Endothelial cell of umbilical vein (primary cell): ENCODE measurements at regions of chr16 and their contacts with region 1.

Region 1: GRCh38 chr16:29815793-29816693 is at the start of gene PAGR1:
- DNase-seq: peak; percentile 100
- H3K4me3 ChIP-seq: peak within 1 kb of the TSS; percentile 65 to 85 (median 81)
- H3K27ac ChIP-seq: peak within 1 kb of the TSS; percentile 47
- H3K4me1 ChIP-seq: peaks cover 35% of the 10 kb centered on the region
- H3K27me3 ChIP-seq: no peaks in the 10 kb centered on the region
- CTCF ChIP-seq: peak; percentile 95 to 98
- POLR2A ChIP-seq: peak; percentile 80
- total RNA-seq, gene PAGR1: 24.2 and 26.3 TPM in 2 replicates

Region 2: GRCh38 chr16:29664091-29664921 is 151.7 kb before region 1 on chr16:
- CTCF ChIA-PET with region 1: no interaction called
- POLR2A ChIA-PET with region 1: no interaction called
- dilution Hi-C with region 1: no loop called
- intact Hi-C with region 1: no loop called
- DNase-seq: no peak
- H3K4me3 ChIP-seq: no peak overlapping the region
- H3K27ac ChIP-seq: no peak overlapping the region
- H3K4me1 ChIP-seq: no peaks in the 10 kb centered on the region
- H3K27me3 ChIP-seq: no peaks in the 10 kb centered on the region
- CTCF ChIP-seq: no peak
- POLR2A ChIP-seq: no peak

Region 3: DNA sequence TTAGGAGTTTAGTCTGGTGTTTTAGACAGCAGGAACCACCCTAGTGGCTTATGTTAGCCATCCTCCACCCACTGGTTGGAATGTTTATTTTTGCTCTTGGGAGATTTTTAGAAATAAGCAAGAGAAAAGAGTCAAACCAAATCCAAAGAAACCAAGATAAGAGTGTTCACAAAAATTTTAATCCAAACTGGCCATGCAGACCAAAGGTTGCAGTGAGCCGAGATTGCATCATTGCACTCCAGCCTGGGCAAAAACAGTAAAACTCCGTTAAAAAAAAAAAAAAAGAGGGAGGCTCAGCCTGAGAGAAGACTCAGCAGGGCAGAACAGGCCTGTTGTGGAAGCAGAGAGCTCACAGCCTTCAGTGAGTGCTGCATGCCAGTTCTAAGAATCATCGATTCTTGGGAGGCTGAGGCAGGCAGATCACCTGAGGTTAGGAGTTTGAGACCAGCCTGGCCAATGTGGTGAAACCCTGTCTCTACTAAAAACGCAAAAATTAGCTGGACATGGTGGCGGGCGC is 58.0 kb before region 1 on chr16:
- CTCF ChIA-PET with region 1: no interaction called
- POLR2A ChIA-PET with region 1: no interaction called
- dilution Hi-C with region 1: no loop called
- intact Hi-C with region 1: no loop called
- DNase-seq: no peak
- H3K4me3 ChIP-seq: no peak overlapping the region
- H3K27ac ChIP-seq: no peak overlapping the region
- H3K4me1 ChIP-seq: no peaks in the 10 kb centered on the region
- H3K27me3 ChIP-seq: no peaks in the 10 kb centered on the region
- CTCF ChIP-seq: no peak
- POLR2A ChIP-seq: no peak

Region 4: DNA sequence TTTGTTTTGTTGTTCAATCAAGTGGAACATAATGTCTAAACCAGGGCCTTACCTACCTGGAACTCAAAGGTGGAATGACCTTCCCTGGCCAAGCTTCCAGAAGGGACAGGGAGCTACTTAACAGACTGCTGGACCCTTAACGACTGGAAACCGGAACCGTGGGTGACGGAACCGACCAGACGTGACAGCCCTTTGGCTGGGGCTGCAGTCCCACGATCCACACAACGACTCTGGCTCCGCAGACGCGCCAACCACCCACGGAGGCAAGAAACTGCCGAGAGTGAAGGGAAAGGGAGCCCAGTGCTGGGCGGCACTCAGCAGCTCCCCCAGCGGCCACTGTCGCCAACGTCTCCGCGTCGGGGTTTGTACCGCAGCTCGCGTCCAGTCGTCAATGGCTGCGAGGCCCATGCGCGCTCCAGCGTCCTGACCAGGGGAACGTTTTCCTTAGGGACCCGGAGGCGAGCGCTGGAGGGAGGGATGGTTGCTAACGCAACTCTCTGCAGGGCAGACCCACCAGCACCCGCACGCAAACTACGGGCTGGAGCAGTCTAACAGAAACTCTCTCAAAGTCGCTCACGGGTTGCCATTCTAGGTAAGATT is 31.0 kb before region 1 on chr16:
- CTCF ChIA-PET with region 1: interaction called, 10 read pairs
- POLR2A ChIA-PET with region 1: no interaction called
- dilution Hi-C with region 1: no loop called
- intact Hi-C with region 1: loop called (anchors 1 kb)
- DNase-seq: peak; percentile 76
- H3K4me3 ChIP-seq: peak overlapping the region in 1 of 3 experiments; percentile 5
- H3K27ac ChIP-seq: no peak overlapping the region
- H3K4me1 ChIP-seq: peaks cover 10% of the 10 kb centered on the region
- H3K27me3 ChIP-seq: peaks cover 7 to 16% of the 10 kb centered on the region in 2 experiments
- CTCF ChIP-seq: peak; percentile 91 to 98
- POLR2A ChIP-seq: no peak

Region 5: GRCh38 chr16:29805378-29806098 is 10.5 kb before region 1 on chr16:
- CTCF ChIA-PET with region 1: interaction called, 50 read pairs
- POLR2A ChIA-PET with region 1: interaction called, 3 read pairs
- dilution Hi-C with region 1: no loop called
- intact Hi-C with region 1: no loop called
- DNase-seq: peak; percentile 97
- H3K4me3 ChIP-seq: peak overlapping the region; percentile 52 to 61 (median 58)
- H3K27ac ChIP-seq: peak overlapping the region; percentile 68
- H3K4me1 ChIP-seq: peaks cover 30% of the 10 kb centered on the region
- H3K27me3 ChIP-seq: no peaks in the 10 kb centered on the region
- CTCF ChIP-seq: no peak
- POLR2A ChIP-seq: peak; percentile 72

Region 6: DNA sequence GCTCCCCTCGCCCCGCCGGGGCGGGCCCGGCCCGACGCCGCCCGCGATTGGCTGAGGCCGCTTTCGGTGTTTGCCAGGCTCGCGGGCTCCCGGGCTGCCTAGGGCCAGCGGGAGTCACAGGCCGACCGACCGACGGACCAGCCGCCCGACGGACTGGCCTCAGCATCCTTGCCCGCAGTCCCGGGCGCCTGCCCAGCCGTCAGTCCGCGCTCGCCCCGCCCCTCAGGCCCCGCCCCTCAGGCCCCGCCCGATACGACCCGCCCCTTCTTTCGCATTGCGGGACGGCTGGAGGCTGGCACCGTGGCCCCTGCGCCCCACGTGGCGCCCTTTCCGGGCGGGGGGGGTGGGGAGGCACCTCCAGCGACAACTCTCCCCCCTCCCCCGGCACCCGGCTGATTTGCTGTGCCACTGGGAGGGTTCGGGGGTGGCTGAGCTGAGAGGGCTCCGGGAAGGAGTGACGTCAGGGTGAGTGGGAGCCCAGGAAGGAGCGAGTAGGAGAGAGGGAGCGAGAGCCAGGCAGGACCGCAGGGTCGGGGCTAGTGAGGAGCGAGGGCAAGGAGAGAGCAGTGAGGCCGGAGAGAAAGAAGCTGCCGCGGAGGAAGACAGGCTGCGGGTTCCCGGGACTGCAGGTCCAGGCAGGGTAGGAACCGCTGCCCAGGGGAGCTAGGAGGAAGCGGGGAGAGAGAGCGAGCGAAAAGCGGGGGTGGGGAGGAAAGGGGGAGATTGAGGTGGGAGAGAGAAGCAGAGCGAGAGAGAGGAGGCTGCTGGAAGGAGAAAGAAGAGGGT is 84.3 kb after region 1 on chr16 and contains the start of gene ASPHD1:
- CTCF ChIA-PET with region 1: interaction called, 3 read pairs
- POLR2A ChIA-PET with region 1: no interaction called
- dilution Hi-C with region 1: no loop called
- intact Hi-C with region 1: loop called (anchors 10 kb)
- DNase-seq: peak; percentile 49
- H3K4me3 ChIP-seq: peak within 1 kb of the TSS; percentile 26 to 46 (median 46)
- H3K27ac ChIP-seq: no peak within 1 kb of the TSS
- H3K4me1 ChIP-seq: peaks cover 5% of the 10 kb centered on the region
- H3K27me3 ChIP-seq: peaks cover 5 to 8% of the 10 kb centered on the region in 2 experiments
- CTCF ChIP-seq: no peak
- POLR2A ChIP-seq: no peak
- total RNA-seq, gene ASPHD1: 0.88 and 1.2 TPM in 2 replicates

Region 7: GRCh38 chr16:29973384-29974246 is 157.6 kb after region 1 on chr16 and contains the start of gene TAOK2:
- CTCF ChIA-PET with region 1: interaction called, 3 read pairs
- POLR2A ChIA-PET with region 1: no interaction called
- dilution Hi-C with region 1: no loop called
- intact Hi-C with region 1: loop called (anchors 5 kb)
- DNase-seq: peak; percentile 100
- H3K4me3 ChIP-seq: peak within 1 kb of the TSS; percentile 79 to 95 (median 94)
- H3K27ac ChIP-seq: peak within 1 kb of the TSS; percentile 81
- H3K4me1 ChIP-seq: peaks cover 38% of the 10 kb centered on the region
- H3K27me3 ChIP-seq: no peaks in the 10 kb centered on the region
- CTCF ChIP-seq: no peak
- POLR2A ChIP-seq: peak; percentile 89
- total RNA-seq, gene TAOK2: 112 and 114 TPM in 2 replicates